ENCODE measurements at regions of chr18 and their contacts with region 1.

Region 1: GRCh38 chr18:5890331-5891183 is 4.8 kb downstream of the TMEM200C start:
- DNase-seq: peak; percentile 82
- CTCF ChIP-seq: peak; percentile 76

Region 2: DNA sequence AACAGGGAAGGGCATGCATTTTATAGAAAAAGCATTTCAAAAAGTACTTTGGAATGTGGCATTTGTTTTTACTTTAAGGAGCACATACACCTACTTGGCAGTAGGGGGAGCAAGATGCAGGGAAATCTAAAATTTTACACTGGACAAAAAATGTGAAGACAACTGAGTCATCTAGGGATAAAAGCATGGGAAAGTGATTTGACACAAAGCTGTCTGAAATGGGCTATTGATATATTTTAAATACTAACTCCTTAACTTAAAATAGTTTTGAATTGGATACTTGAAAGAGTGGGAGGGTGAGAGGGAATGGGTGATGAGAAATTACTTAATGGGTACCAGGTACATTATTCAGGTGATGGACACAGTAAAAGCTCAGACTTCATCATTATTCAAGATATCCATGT is 11.1 kb before region 1 on chr18:
- CTCF ChIA-PET with region 1: interaction called, 95 read pairs
- POLR2A ChIA-PET with region 1: no interaction called
- DNase-seq: no peak
- CTCF ChIP-seq: peak; percentile 65

Region 3: DNA sequence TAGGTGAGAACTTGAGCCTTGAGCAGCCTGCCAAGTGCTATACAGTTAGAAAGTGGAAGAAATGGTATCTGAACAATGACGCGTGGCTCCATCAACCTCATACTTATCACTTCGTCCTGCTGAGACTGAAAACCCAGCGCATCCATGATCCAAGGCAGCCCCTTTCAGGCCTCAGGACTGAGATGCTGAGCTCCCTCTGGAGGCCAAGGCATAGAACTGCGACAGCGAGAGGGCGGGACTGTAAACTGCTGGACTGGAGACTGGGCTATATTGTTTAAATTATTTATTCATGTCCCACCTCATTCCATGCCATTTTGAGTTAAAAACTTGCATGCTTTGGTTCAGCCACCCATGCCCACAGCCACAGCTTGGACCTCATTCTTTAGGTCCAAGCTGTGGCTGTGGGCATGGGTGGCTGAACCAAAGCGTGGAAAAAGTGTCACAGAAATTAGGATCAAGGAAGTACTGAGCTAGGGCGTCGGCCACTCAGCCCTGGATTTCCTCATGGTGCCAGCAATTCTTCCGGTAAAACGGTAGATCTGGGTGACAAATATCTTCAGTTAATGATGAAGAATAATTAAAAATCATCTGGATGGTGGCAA is 328.7 kb after region 1 on chr18:
- CTCF ChIA-PET with region 1: interaction called, 10 read pairs
- POLR2A ChIA-PET with region 1: no interaction called
- DNase-seq: peak; percentile 42
- CTCF ChIP-seq: peak; percentile 63

Region 4: DNA sequence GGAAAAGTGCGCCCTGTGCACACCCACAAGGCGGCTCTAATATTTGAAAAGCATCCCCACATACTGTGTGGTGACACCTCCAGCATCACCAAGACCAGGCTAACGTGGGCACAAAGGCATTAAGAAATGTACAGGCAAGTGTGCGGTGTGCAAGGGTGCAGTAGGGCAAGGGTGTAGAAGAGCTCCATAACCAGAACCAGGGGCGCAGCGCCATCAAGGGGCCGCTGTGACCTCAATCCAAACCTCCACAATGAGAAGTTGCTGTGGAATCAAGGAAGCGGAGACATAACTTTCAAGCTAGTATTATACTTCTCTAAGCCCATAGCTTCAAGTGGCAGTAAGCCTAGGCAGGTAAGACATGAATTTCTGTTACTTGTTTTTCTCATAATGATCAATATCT is 511.1 kb after region 1 on chr18:
- CTCF ChIA-PET with region 1: interaction called, 15 read pairs
- POLR2A ChIA-PET with region 1: no interaction called
- DNase-seq: no peak
- CTCF ChIP-seq: peak; percentile 20